Right ventricle myocardium superior (tissue), 1 donor: ENCODE measurements at regions of chr17 and their contacts with region 1.

Region 1: GRCh38 chr17:73255671-73256181 is 6.0 kb downstream of the CPSF4L start:
- DNase-seq: peak; percentile 65
- ATAC-seq: peak; percentile 82

Region 2: GRCh38 chr17:72602517-72603419 is 653.0 kb before region 1 on chr17:
- intact Hi-C with region 1: no loop called
- DNase-seq: no peak
- ATAC-seq: no peak

Region 3: GRCh38 chr17:73371285-73371684 is 115.6 kb after region 1 on chr17:
- intact Hi-C with region 1: loop called (anchors 2 kb)
- DNase-seq: peak; percentile 8
- ATAC-seq: no peak